ENCODE measurements at regions of chr19 and their contacts with region 1.

Region 1: GRCh38 chr19:1863726-1864480 is 524 bp upstream of the KLF16 start:
- DNase-seq: peak; percentile 88 to 93 (median 92)
- H3K4me3 ChIP-seq: peak overlapping the region; percentile 46 to 86 (median 68)
- H3K27ac ChIP-seq: peak overlapping the region; percentile 81 to 92 (median 87)
- H3K4me1 ChIP-seq: peaks cover 21 to 31% of the 10 kb centered on the region in 2 donors
- H3K27me3 ChIP-seq: no peaks in the 10 kb centered on the region
- CTCF ChIP-seq: no peak
- POLR2A ChIP-seq: peak in 1 of 2 donors; percentile 1

Region 2: DNA sequence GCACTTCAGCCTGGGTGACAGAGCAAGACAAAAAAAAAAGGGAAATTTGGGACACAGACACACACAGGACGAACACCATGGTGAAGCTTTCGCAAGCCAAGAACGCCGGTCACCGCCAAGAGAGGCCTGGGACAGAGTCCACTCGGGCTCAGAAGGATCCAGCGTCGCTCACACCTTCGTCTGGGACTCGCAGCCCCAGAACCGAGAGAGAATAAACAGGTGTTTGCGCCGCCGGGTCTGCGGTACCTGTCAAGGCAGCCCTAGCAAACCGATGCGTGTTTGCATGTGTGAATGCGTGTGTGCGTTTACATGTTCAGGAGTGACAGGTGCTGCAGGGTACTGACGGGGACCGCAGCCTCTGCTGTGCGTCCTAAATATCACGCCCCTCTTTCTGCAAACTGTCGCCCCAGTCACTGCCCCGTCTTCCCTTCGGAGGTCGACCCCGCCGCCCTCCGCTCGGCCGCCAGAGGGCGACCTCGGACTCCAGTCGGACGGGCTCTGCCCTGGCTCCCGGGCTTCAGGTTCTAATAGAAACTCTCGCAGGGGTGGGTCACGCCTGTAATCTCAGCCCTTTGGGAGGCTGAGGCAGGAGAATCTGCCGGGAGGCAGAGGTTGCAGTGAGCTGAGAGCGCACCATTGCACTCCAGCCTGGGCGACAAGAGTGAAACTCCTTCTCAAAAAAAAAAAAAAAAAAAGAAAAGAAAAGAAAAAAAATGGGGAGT is 65.3 kb after region 1 on chr19:
- intact Hi-C with region 1: loop called in 1 of 2 experiments (anchors 10 kb)
- DNase-seq: peak; percentile 70 to 88 (median 83)
- H3K4me3 ChIP-seq: peak overlapping the region in 1 of 4 donors; percentile 30
- H3K27ac ChIP-seq: peak overlapping the region in 1 of 5 donors; percentile 44
- H3K4me1 ChIP-seq: peaks cover 3 to 11% of the 10 kb centered on the region in 2 donors
- H3K27me3 ChIP-seq: no peaks in the 10 kb centered on the region
- CTCF ChIP-seq: peak; percentile 79 to 89 (median 88)
- POLR2A ChIP-seq: no peak

Region 3: DNA sequence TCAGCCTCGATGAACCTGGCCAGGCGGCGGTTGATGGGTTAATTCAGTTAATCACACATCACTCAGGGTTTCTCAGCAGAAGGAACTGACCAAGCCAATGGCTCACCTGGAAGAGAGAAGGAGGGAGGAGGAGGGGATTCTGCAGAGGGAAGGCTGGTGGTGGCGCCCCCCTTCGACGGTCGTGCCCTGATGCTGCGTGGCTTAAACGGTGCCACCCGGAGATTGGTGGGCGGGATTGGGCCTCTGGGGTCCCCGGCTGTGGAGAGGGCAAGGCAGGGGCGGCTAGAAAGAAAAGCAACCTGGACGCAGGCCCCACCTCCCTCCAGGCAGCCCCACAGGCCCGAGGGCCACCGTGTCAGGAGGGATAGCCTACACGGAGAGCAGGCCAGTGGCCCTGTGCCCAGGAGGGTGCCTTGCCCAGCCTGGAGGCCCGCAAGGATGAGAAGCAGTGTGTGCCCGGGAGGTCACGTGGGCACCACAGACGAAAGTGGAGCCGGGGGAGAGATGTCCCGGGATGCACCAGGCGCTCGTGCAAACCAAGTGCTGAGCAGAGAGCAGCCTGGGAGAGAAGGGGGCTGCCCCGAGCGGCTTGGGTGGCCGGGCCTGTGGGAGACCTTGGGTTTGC is 93.1 kb after region 1 on chr19:
- intact Hi-C with region 1: no loop called
- DNase-seq: peak; percentile 68 to 92 (median 83)
- H3K4me3 ChIP-seq: no peak overlapping the region
- H3K27ac ChIP-seq: peak overlapping the region in 1 of 5 donors; percentile 22
- H3K4me1 ChIP-seq: peaks cover 4 to 9% of the 10 kb centered on the region in 2 donors
- H3K27me3 ChIP-seq: no peaks in the 10 kb centered on the region
- CTCF ChIP-seq: no peak
- POLR2A ChIP-seq: peak in 1 of 2 donors; percentile 18

Measured in adrenal gland (tissue), 19 donors.